Dorsolateral prefrontal cortex (tissue), 120 donors: ENCODE measurements at regions of chr2 and their contacts with region 1.

Region 1: GRCh38 chr2:71226965-71227560 is at the start of gene PAIP2B:
- DNase-seq: peak; percentile 98 to 100 (median 99)
- H3K4me3 ChIP-seq: peak within 1 kb of the TSS; percentile 67 to 99 (median 93)
- H3K27ac ChIP-seq: peak within 1 kb of the TSS; percentile 46 to 97 (median 91)
- H3K27me3 ChIP-seq: no peaks in the 10 kb centered on the region
- CTCF ChIP-seq: peak in 22 of 56 donors; percentile 2 to 56 (median 15)
- total RNA-seq, gene PAIP2B: 17.6 to 189 (median 63.5) TPM

Region 2: DNA sequence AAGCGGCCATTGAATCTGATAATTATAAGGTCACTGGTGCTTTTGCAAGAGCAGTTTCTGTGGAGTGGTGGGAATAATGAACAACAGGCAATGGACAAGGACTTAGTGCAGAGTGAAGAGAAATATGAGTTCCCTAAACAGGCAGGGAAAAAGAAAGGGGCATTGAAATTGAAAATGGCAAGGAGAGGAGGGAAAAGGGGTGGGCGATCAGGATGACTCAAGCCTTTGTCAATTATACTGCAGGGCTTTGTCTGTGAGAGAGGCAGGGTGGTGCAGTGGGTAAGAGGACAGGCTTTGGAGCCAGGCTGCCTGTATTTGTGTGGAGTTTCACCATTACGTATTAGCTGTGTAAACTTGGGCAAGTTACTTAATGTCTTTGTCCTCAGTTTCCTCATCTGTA is 29.4 kb after region 1 on chr2:
- intact Hi-C with region 1: loop called in 1 of 2 experiments (anchors 1 kb)
- DNase-seq: peak; percentile 4 to 87 (median 67)
- H3K4me3 ChIP-seq: peak overlapping the region in 11 of 59 donors; percentile 5 to 28 (median 14)
- H3K27ac ChIP-seq: peak overlapping the region in 58 of 59 donors; percentile 13 to 96 (median 87)
- H3K27me3 ChIP-seq: no peaks in the 10 kb centered on the region
- CTCF ChIP-seq: peak in 11 of 56 donors; percentile 6 to 41 (median 16)

Region 3: GRCh38 chr2:71276311-71277146 is 49.5 kb after region 1 on chr2:
- intact Hi-C with region 1: loop called (anchors 1 kb)
- DNase-seq: peak; percentile 88 to 97 (median 93)
- H3K4me3 ChIP-seq: peak overlapping the region; percentile 43 to 89 (median 75)
- H3K27ac ChIP-seq: peak overlapping the region; percentile 6 to 98 (median 92)
- H3K27me3 ChIP-seq: no peaks in the 10 kb centered on the region
- CTCF ChIP-seq: peak in 27 of 56 donors; percentile 1 to 53 (median 25)

Region 4: DNA sequence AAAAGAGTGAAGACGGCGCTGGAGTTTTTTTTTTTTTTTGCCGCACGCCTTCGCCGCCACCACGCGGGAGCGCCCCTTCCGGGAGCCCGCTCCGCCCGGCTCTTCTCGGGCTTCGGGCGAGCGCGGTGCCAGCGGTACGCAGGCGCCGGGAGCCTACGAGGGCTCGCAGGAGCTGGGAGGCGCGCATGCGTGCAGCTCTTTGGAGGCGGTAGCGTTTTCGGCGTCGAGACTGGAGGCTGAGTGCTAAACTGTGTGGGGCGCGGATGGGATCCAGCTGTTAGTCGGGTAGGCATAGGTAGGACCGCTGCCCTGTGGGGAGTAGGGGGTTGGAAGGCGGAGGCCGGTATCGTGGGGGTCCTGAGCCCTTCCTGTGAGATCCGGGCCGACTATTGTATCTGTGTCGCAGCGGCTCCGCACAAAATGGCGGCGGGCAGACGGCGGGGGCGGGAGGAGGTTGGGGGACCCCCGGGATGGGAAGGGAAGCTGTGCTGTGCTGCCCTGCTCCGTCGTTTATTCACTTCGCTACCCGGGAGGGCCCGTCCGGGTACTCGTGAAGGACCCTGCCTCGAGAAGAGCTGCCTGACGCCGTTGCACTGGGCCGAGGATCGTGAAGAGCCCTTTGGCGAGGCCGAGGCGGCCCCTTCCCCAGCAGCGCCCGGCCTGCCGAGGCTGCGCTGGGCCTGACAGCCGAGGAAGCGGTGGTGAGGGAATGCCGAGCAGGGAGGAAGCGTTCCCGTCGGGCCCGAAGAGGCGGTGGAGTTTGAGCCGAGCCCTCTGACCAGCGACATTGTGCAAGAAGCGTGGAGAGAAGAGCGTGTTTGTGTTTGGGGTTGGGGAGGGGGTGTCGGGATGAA is 104.7 kb after region 1 on chr2 and contains the start of gene ZNF638:
- intact Hi-C with region 1: loop called (anchors 2 kb)
- DNase-seq: peak; percentile 77 to 93 (median 87)
- H3K4me3 ChIP-seq: peak within 1 kb of the TSS; percentile 58 to 100 (median 95)
- H3K27ac ChIP-seq: peak within 1 kb of the TSS; percentile 67 to 99 (median 94)
- H3K27me3 ChIP-seq: no peaks in the 10 kb centered on the region
- CTCF ChIP-seq: peak; percentile 61 to 97 (median 82)
- total RNA-seq, gene ZNF638: 180 to 307 (median 230) TPM

Region 5: GRCh38 chr2:71372042-71372441 is 145.0 kb after region 1 on chr2:
- intact Hi-C with region 1: no loop called
- DNase-seq: no peak
- H3K4me3 ChIP-seq: no peak overlapping the region
- H3K27ac ChIP-seq: peak overlapping the region in 1 of 59 donors; percentile 1
- H3K27me3 ChIP-seq: no peaks in the 10 kb centered on the region
- CTCF ChIP-seq: no peak

Region 6: GRCh38 chr2:71385012-71385411 is 157.9 kb after region 1 on chr2:
- intact Hi-C with region 1: loop called (anchors 10 kb)
- DNase-seq: no peak
- H3K4me3 ChIP-seq: no peak overlapping the region
- H3K27ac ChIP-seq: peak overlapping the region in 1 of 59 donors; percentile 8
- H3K27me3 ChIP-seq: no peaks in the 10 kb centered on the region
- CTCF ChIP-seq: no peak

Region 7: GRCh38 chr2:71466303-71467173 is 239.5 kb after region 1 on chr2:
- intact Hi-C with region 1: loop called in 1 of 2 experiments (anchors 5 kb)
- DNase-seq: peak in 3 of 10 donors; percentile 22 to 53 (median 48)
- H3K4me3 ChIP-seq: peak overlapping the region; percentile 51 to 87 (median 68)
- H3K27ac ChIP-seq: peak overlapping the region in 8 of 59 donors; percentile 12 to 52 (median 30)
- H3K27me3 ChIP-seq: peaks cover 0 to 20% (median 0%) of the 10 kb centered on the region in 45 donors
- CTCF ChIP-seq: peak in 1 of 56 donors; percentile 11

Region 8: GRCh38 chr2:71510196-71510807 is 283.2 kb after region 1 on chr2:
- intact Hi-C with region 1: loop called (anchors 2 to 5 kb)
- DNase-seq: peak; percentile 65 to 77 (median 71)
- H3K4me3 ChIP-seq: no peak overlapping the region
- H3K27ac ChIP-seq: no peak overlapping the region
- H3K27me3 ChIP-seq: no peaks in the 10 kb centered on the region
- CTCF ChIP-seq: peak; percentile 78 to 99 (median 94)